RWPE1 (cell line): ENCODE measurements at regions of chr12 and their contacts with region 1.

Region 1: DNA sequence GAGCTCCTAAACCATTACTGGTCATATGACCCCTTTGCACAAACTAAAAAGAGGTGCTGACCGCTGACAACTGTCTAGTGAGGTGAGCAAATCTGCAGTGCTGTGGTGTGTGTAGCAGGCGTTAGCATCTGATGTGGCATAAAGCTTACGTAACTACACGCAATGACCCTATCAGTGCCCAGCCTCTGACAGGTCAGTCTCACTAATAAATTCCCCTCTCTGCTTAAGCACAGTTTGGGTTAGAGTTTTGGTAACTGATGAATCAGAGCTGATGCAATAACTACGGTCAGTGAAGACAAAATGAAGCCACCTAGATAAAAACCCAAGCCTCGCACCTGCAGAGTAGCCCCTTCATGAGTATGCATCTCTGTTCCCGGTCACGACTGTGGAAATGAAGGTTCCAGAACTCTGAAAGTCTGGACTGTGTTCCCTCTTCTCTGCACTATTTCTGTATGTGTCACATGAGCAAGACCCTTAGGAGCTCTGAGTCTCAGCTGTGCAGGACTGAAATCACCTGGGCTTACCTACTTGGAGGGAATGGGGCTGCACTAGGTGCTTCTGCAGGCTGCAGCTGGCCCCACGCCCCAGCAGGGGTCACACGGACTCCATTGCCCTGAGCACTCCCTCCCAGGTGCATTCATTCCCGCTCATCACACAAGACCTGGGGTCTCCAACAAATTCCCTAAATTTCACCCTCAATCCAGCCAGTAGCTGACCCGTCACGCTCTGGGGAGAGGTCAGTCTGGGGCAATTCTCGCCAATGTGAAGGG is 54.4 kb downstream of the RIMBP2 start:
- DNase-seq: peak; percentile 22
- H3K27ac ChIP-seq: no peak overlapping the region
- CTCF ChIP-seq: no peak

Region 2: GRCh38 chr12:130686511-130686991 is 24.9 kb after region 1 on chr12:
- CTCF ChIA-PET with region 1: no interaction called
- POLR2A ChIA-PET with region 1: no interaction called
- DNase-seq: no peak
- H3K27ac ChIP-seq: no peak overlapping the region
- CTCF ChIP-seq: no peak

Region 3: GRCh38 chr12:130747867-130748740 is 86.4 kb after region 1 on chr12:
- CTCF ChIA-PET with region 1: interaction called, 12 read pairs
- POLR2A ChIA-PET with region 1: no interaction called
- DNase-seq: peak; percentile 64
- H3K27ac ChIP-seq: no peak overlapping the region
- CTCF ChIP-seq: peak; percentile 85